CD14-positive monocyte (primary cell): ENCODE measurements at regions of chr19 and their contacts with region 1.

Region 1: DNA sequence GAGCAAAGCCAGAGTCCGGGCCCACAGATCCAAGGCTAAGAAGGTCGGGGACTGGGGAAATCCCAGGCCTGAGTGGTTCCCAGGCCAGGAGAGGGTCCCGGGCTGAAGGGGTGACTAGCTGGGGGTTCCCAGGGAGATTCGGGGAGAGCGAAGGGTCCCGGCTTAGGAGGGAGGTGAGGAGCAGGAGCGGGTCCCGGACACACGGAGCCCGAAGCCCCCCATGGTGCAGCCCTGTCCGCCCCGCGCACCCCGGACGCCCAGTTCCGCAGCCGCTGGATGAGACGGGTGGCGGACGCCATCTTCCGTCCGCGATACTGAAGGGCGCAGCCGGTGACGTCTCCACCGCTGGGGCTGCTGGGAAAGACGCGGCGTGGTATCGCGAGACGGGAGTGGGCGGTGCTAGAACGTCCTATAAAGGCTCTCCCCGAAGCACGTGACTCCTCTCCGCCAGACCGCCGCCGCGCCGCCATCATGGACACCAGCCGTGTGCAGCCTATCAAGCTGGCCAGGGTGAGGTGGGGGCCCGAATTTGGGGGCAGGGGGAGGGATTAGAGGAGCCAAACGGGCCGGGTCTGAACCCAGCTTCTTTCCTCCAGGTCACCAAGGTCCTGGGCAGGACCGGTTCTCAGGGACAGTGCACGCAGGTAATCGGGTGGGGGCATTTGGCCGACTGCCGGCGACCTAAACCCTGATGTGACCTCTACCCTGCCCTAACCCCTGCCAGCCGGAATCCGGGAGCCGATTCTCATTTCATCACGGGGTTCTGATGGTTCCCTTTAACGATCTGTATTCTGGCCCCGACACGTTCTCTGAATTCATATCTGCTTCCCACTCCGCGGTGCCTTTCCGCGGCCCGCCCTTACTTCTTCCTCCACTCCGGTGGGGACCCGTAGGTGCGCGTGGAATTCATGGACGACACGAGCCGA is at the starts of genes NDUFA7 and RPS28:
- DNase-seq: peak; percentile 97
- H3K4me3 ChIP-seq: peak within 1 kb of the TSS; percentile 61 to 100 (median 90)
- H3K4me3 Mint-ChIP-seq: peak within 1 kb of the TSS; percentile 98 to 99
- H3K27ac ChIP-seq: peak within 1 kb of the TSS; percentile 84 to 97
- H3K27ac Mint-ChIP-seq: peak within 1 kb of the TSS; percentile 94 to 99 (median 97)
- H3K4me1 ChIP-seq: peaks cover 20 to 26% of the 10 kb centered on the region in 2 donors
- H3K4me1 Mint-ChIP-seq: peaks cover 28% of the 10 kb centered on the region
- H3K27me3 ChIP-seq: no peaks in the 10 kb centered on the region
- H3K27me3 Mint-ChIP-seq: peaks cover 0 to 7% (median 3%) of the 10 kb centered on the region in 3 donors
- CTCF ChIP-seq: no peak
- polyA plus RNA-seq, gene NDUFA7: 49.9 to 153 (median 133) TPM
- polyA plus RNA-seq, gene RPS28: 539 to 1,104 (median 984) TPM

Region 2: GRCh38 chr19:8129060-8129459 is 192.3 kb before region 1 on chr19:
- intact Hi-C with region 1: no loop called
- DNase-seq: no peak
- H3K4me3 ChIP-seq: no peak overlapping the region
- H3K4me3 Mint-ChIP-seq: no peak overlapping the region
- H3K27ac ChIP-seq: no peak overlapping the region
- H3K27ac Mint-ChIP-seq: no peak overlapping the region
- H3K4me1 ChIP-seq: no peaks in the 10 kb centered on the region
- H3K4me1 Mint-ChIP-seq: no peaks in the 10 kb centered on the region
- H3K27me3 ChIP-seq: no peaks in the 10 kb centered on the region
- H3K27me3 Mint-ChIP-seq: peaks cover 9 to 12% (median 9%) of the 10 kb centered on the region in 3 donors
- CTCF ChIP-seq: no peak

Region 3: DNA sequence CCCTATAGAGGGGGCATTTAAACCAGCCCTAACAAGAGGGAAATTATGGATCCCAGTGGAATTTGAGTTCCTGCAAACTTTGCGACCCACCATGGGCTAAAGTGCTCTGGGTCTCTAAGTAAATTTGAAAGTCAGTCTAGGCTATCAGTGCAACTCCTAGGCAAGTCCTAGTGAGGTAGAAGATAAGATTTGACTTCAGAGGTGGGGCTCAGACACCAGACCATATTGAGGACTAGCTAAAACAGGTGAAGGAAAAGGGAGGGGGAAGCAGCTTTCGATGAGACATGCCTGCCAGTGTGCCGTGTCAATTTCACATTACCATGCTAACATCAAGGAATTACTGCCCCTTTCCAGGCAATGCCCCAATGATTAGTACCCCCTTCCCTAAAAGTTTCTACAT is 51.6 kb before region 1 on chr19:
- intact Hi-C with region 1: loop called in 1 of 2 experiments (anchors 5 kb)
- DNase-seq: no peak
- H3K4me3 ChIP-seq: no peak overlapping the region
- H3K4me3 Mint-ChIP-seq: peak overlapping the region; percentile 90 to 95
- H3K27ac ChIP-seq: no peak overlapping the region
- H3K27ac Mint-ChIP-seq: peak overlapping the region in 1 of 7 donors; percentile 61
- H3K4me1 ChIP-seq: peaks cover 4 to 6% of the 10 kb centered on the region in 2 donors
- H3K4me1 Mint-ChIP-seq: peaks cover 9% of the 10 kb centered on the region
- H3K27me3 ChIP-seq: peaks cover 0 to 6% of the 10 kb centered on the region in 2 donors
- H3K27me3 Mint-ChIP-seq: peaks cover 16 to 38% (median 30%) of the 10 kb centered on the region in 3 donors
- CTCF ChIP-seq: no peak

Region 4: GRCh38 chr19:8389891-8390616 is 68.7 kb after region 1 on chr19 and contains the start of gene RAB11B:
- intact Hi-C with region 1: loop called in 1 of 2 experiments (anchors 2 kb)
- DNase-seq: peak; percentile 99
- H3K4me3 ChIP-seq: peak within 1 kb of the TSS; percentile 53 to 76 (median 64)
- H3K4me3 Mint-ChIP-seq: peak within 1 kb of the TSS; percentile 88 to 91
- H3K27ac ChIP-seq: peak within 1 kb of the TSS; percentile 61 to 89
- H3K27ac Mint-ChIP-seq: peak within 1 kb of the TSS; percentile 91 to 98 (median 96)
- H3K4me1 ChIP-seq: peaks cover 18 to 25% of the 10 kb centered on the region in 2 donors
- H3K4me1 Mint-ChIP-seq: peaks cover 28% of the 10 kb centered on the region
- H3K27me3 ChIP-seq: no peaks in the 10 kb centered on the region
- H3K27me3 Mint-ChIP-seq: no peaks in the 10 kb centered on the region
- CTCF ChIP-seq: no peak
- polyA plus RNA-seq, gene RAB11B: 36.5 to 128 (median 45.4) TPM